Activated T-helper 2 cell treated with anti-CD3 and anti-CD28 coated beads, Interferon-gamma antibody, Interleukin-2, Interleukin-4, amounts not matched to agents 10 μg/mL and 5 μg/mL and 100 μg/mL, durations not matched to agents 14 hours and 24 hours and 36 hours (primary cell): ENCODE measurements at regions of chr19 and their contacts with region 1.

Region 1: GRCh38 chr19:34428549-34429285 is 536 bp downstream of the UBA2 start:
- DNase-seq: peak; percentile 41
- H3K4me3 Mint-ChIP-seq: peak overlapping the region; percentile 98
- H3K27ac Mint-ChIP-seq: peak overlapping the region; percentile 93
- H3K4me1 Mint-ChIP-seq: peaks cover 23% of the 10 kb centered on the region
- H3K27me3 Mint-ChIP-seq: no peaks in the 10 kb centered on the region

Region 2: DNA sequence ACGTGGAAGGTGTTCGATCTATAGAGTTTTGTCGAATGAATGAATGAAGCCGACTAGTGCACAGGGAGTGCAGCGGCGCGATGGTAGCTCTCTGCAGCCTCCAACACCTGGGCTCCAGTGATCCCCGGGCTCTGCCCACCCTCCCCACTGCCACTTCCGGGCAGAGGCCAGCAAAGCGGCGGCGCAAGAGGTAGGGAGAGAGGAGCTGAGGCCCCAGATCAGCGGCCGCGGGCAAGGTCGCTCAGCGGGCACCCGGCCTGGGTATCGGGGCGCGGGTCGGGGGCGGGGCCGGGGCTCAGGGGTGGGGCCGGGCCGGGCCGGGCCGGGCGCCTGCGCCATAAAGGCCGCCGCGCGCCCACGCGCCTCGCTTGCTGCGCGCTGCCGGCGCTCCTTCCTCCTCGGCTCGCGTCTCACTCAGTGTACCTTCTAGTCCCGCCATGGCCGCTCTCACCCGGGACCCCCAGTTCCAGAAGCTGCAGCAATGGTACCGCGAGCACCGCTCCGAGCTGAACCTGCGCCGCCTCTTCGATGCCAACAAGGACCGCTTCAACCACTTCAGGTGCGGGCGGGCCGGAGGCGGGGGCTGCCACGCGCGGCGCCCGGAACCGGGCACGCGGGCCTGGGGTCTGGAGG is 63.8 kb before region 1 on chr19 and contains the start of gene GPI:
- intact Hi-C with region 1: loop called (anchors 2 kb)
- DNase-seq: peak; percentile 64
- H3K4me3 Mint-ChIP-seq: peak within 1 kb of the TSS; percentile 100
- H3K27ac Mint-ChIP-seq: peak within 1 kb of the TSS; percentile 89
- H3K4me1 Mint-ChIP-seq: peaks cover 53% of the 10 kb centered on the region
- H3K27me3 Mint-ChIP-seq: no peaks in the 10 kb centered on the region
- total RNA-seq, gene GPI: 622 and 630 TPM in 2 replicates

Region 3: DNA sequence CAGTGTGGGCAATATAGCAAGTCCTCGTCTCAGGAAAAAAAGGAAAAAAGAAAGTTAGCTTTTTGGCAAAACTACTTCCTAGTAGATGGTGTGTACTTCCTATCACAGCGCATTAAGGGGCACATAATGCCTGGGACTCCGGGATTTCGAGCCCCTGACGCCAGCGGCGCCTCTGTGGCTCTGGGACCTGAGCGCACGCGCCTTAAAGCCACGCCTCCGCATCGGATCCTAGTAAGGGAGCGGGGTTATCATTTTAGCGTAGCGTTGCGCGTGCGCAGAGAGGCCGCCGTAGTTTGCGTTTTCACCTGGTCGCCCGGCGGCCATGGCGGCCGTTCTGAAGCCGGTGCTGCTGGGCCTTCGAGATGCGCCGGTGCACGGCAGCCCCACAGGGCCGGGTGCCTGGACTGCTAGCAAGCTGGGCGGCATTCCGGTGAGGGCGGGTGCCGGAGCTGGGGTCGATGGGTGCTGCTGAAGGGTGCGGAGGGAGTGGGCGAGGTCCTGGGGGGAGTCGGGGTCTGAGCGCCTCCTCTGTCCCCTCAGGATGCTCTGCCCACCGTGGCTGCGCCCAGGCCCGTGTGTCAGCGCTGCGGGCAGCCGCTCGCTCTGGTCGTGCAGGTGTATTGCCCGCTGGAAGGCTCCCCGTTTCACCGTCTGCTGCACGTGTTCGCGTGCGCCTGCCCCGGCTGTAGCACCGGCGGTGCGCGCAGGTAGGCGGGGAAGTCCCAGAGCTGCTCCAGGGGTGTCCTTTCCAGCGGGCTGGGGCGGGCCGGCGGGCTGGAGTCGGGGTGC is 24.4 kb before region 1 on chr19 and contains the start of gene PDCD2L:
- intact Hi-C with region 1: loop called (anchors 1 kb)
- DNase-seq: peak; percentile 88
- H3K4me3 Mint-ChIP-seq: peak within 1 kb of the TSS; percentile 92
- H3K27ac Mint-ChIP-seq: peak within 1 kb of the TSS; percentile 79
- H3K4me1 Mint-ChIP-seq: peaks cover 6% of the 10 kb centered on the region
- H3K27me3 Mint-ChIP-seq: no peaks in the 10 kb centered on the region
- total RNA-seq, gene PDCD2L: 36.7 and 40.3 TPM in 2 replicates

Region 4: GRCh38 chr19:34452723-34453122 is 24.0 kb after region 1 on chr19:
- intact Hi-C with region 1: no loop called
- DNase-seq: no peak
- H3K4me3 Mint-ChIP-seq: no peak overlapping the region
- H3K27ac Mint-ChIP-seq: no peak overlapping the region
- H3K4me1 Mint-ChIP-seq: no peaks in the 10 kb centered on the region
- H3K27me3 Mint-ChIP-seq: no peaks in the 10 kb centered on the region

Region 5: DNA sequence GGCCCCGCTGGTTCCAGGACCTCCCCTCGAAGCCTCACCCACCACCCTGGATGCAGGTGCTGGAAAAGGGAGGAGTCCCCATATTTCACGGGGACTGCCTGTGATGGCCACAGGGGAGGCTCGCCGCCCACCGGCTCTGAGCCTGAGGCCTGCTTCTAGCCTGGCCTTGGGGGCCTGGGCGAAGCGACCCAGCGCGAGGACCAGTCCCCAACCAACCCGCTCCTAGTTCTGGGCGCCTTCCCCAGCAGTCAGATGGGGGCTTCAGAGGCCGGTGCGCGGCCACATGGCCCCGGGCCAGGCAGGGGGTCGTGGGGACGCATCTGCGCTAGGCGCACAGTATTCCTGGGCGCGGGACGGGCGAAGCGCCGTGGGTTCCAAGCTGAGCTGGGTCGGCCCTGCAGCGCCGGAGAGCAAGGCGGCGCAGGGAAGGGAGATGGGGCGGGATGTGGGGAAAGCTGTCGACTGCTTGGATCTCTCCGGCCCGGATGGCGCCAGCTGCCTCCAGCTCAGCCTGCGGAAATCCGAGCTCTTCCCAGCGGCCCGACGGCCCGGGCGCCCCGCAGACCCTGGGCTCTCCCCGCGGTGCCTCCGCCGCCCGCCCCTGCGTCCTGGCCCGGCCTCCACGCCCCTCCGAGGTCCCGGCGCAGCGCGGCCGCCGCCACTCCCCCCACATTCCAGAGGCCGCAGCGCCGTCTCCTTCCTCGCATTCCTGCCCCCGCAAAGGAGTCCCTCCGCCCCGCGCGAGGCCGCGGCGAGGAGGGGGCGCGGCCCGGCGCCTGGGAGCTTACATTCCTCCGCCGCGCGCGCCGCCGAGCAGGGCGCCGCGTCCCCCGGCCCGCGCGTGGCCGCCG is 52.5 kb after region 1 on chr19 and contains the start of gene WTIP:
- intact Hi-C with region 1: no loop called
- DNase-seq: no peak
- H3K4me3 Mint-ChIP-seq: no peak within 1 kb of the TSS
- H3K27ac Mint-ChIP-seq: no peak within 1 kb of the TSS
- H3K4me1 Mint-ChIP-seq: peaks cover 2% of the 10 kb centered on the region
- H3K27me3 Mint-ChIP-seq: peaks cover 40% of the 10 kb centered on the region
- total RNA-seq, gene WTIP: 0.57 and 1.0 TPM in 2 replicates